Heart left ventricle (tissue), 16 donors: ENCODE measurements at regions of chr7 and their contacts with region 1.

Region 1: DNA sequence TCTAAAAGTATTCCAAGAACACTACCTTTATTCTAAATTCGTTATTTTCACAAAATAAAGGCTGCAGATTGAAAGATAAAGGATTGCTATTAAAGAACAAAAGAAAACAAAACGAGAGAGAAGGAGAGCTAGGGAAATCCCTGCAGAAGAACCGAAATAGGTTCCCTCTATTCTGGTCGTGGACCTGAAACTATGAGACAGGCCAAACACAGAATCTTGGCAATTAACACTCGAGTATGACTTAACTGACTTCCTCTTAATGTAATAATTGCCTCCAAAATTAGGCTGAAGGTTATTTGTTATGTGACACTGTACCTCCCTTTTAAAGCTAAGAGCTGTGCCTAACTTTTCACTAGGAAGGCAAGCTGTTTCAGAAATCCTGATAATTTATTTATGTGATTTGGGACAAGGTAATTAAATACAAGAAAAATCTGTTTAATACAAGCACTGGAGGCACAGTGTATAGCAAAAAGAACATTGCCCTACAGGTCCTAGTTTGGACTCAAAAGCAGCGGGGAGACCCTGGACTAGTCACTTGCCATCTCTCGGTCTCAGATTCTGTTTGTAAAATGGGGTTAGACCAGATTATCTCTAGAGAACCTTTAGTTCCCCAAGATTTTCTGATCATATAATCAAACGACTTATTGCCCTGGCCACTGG is 11.6 kb downstream of the NAMPT start:
- DNase-seq: no peak
- ATAC-seq: peak; percentile 42 to 57 (median 50)
- H3K4me3 ChIP-seq: no peak overlapping the region
- H3K27ac ChIP-seq: peak overlapping the region in 7 of 12 donors; percentile 23 to 51 (median 33)
- H3K4me1 ChIP-seq: peaks cover 0 to 44% (median 15%) of the 10 kb centered on the region in 12 donors
- H3K27me3 ChIP-seq: no peaks in the 10 kb centered on the region
- CTCF ChIP-seq: no peak
- POLR2A ChIP-seq: no peak

Region 2: GRCh38 chr7:106094800-106095199 is 178.3 kb before region 1 on chr7:
- intact Hi-C with region 1: no loop called
- DNase-seq: no peak
- ATAC-seq: no peak
- H3K4me3 ChIP-seq: no peak overlapping the region
- H3K27ac ChIP-seq: no peak overlapping the region
- H3K4me1 ChIP-seq: peaks cover 0 to 13% (median 6%) of the 10 kb centered on the region in 12 donors
- H3K27me3 ChIP-seq: no peaks in the 10 kb centered on the region
- CTCF ChIP-seq: no peak
- POLR2A ChIP-seq: no peak

Region 3: GRCh38 chr7:106223156-106223555 is 50.0 kb before region 1 on chr7:
- intact Hi-C with region 1: loop called in 3 of 10 experiments (anchors 5 to 10 kb)
- DNase-seq: no peak
- ATAC-seq: no peak
- H3K4me3 ChIP-seq: no peak overlapping the region
- H3K27ac ChIP-seq: peak overlapping the region in 6 of 12 donors; percentile 5 to 35 (median 24)
- H3K4me1 ChIP-seq: peaks cover 0 to 20% (median 7%) of the 10 kb centered on the region in 12 donors
- H3K27me3 ChIP-seq: no peaks in the 10 kb centered on the region
- CTCF ChIP-seq: no peak
- POLR2A ChIP-seq: no peak